ENCODE measurements at regions of chr22 and their contacts with region 1.

Region 1: DNA sequence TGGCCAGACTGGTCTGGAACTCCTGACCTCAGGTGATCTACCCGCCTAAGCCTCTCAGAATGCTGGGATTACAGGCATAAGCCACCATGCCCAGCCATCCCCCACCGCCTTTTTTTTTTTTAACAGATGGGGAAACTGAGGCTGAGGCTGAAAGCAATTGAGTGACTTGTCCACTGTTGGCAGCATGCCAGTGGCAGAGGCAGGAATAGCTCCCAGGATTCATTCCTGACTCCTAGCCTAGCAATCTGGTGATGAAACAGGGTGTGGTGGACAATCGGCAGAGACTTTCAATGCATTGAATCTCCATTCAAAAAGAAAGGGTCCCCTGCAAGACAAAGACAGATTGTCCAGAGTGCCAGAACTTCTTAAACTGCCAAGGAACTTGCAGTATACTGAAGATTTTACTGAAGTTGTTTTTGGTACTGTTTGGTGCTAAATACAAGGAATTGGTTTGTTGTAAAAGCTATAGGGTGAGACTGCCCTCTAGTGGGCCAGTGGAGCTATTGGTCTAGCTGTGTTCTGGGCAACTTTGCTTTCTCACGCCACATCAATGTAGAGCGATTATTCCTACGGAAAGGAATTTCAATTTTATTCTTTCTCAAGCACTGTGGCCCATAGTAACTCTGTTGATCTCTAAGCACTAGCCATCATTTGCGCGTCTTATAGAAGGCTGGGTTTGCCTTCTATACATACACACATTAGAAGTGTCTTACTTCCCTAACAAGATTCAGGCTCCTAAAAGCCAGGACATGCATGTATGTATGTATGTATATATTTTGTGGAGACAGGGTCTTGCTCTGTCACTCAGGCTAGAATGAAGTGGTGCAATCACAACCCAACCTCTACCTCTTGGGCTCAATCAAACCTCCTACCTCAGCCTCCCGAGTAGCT is 21.0 kb downstream of the C22orf31 start:
- DNase-seq: no peak

Region 2: DNA sequence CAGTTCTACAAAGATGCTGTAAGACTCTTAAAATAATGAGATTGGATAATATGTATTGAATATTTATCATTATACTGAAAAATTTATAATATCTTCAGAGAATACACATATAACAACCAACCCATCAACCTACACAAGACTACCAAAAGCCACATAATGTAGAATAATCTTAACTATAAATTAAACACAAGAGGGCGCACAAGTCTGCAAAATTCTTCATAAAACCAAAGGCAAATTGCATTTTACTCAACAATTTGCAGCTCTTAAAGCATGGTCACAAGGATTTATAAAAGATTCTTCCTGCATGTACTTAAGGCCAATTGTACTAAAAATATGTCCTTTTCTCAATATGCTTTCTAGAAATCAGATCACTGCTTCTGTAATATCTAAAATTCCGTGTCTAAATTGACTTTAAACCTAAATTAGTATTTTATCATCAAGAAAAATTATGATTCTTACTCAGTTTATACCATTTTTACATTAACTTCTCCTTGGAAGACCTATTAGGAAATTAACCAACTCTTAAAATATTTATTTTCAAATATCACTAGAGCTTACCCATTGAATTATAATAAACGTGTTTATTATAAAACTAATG is 440.0 kb before region 1 on chr22:
- intact Hi-C with region 1: loop called (anchors 10 kb)
- DNase-seq: no peak

Region 3: DNA sequence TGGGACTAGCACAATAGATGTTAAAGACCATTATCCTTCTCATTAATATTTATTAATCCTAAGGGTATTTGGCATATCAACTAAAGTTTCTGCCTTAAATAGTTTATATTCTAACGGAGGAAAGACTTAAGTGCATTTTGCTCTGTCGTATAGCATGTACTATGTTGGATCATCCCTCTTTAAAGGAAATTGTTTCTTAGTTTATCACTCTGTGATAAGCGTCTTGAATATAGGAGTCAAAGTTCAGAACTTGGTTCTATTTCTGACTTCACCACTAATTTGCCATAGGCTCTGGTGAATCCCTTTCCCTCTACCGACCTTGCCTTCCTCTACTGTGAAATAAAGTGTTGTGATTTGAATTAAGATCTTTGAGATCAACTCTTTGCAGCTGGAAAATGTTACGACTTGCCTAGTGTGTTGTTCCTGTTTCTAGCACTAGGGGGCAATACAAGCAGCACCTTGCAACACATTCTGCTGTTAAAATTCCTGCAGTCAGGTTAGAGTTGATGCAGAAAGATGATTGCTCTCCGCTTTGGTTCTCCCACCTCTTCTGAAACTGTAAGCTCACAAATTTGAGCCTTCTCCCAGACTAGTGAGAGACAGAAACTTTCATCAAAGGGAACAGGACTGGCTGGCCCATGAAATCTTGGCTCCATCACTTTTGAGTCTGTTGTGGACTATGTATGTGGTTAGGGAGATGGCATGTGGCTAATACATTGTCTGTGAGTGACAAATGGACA is 185.1 kb before region 1 on chr22:
- intact Hi-C with region 1: loop called (anchors 1 kb)
- DNase-seq: no peak

Region 4: GRCh38 chr22:29004647-29005371 is 35.8 kb before region 1 on chr22:
- intact Hi-C with region 1: no loop called
- DNase-seq: no peak